ENCODE measurements at regions of chrX and their contacts with region 1.

Region 1: DNA sequence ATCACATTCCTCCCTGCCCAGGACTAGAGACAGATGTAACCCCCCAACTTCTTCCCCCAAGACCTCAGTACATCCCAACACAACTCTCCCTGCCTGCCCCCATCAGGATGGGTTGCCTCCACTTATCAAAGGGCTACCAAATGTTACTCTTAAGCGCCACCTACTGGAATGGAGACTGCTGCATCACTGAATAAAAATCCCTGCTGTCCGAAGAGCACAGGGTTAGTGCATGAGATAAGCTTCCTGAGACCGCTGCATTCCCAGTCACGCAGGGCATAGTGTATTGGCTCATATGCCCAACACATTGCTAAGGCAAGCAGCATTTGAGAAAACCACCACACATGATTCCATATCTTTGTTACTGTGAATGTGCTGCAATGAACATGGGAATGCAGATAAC is 544.5 kb downstream of the PPP4R3C start:
- DNase-seq: peak; percentile 31
- H3K4me3 ChIP-seq: no peak overlapping the region
- H3K27ac ChIP-seq: no peak overlapping the region
- H3K4me1 ChIP-seq: peaks cover 36% of the 10 kb centered on the region
- H3K27me3 ChIP-seq: no peaks in the 10 kb centered on the region
- CTCF ChIP-seq: peak; percentile 17 to 26
- POLR2A ChIP-seq: no peak

Region 2: GRCh38 chrX:25873196-25873595 is 1045.4 kb before region 1 on chrX:
- CTCF ChIA-PET with region 1: no interaction called
- POLR2A ChIA-PET with region 1: no interaction called
- dilution Hi-C with region 1: no loop called
- intact Hi-C with region 1: loop called (anchors 10 kb)
- DNase-seq: peak; percentile 30
- H3K4me3 ChIP-seq: no peak overlapping the region
- H3K27ac ChIP-seq: peak overlapping the region; percentile 7
- H3K4me1 ChIP-seq: peaks cover 25% of the 10 kb centered on the region
- H3K27me3 ChIP-seq: no peaks in the 10 kb centered on the region
- CTCF ChIP-seq: no peak
- POLR2A ChIP-seq: no peak

Region 3: GRCh38 chrX:26442340-26442739 is 476.3 kb before region 1 on chrX:
- CTCF ChIA-PET with region 1: no interaction called
- POLR2A ChIA-PET with region 1: no interaction called
- dilution Hi-C with region 1: no loop called
- intact Hi-C with region 1: loop called (anchors 5 kb)
- DNase-seq: peak; percentile 68
- H3K4me3 ChIP-seq: no peak overlapping the region
- H3K27ac ChIP-seq: no peak overlapping the region
- H3K4me1 ChIP-seq: no peaks in the 10 kb centered on the region
- H3K27me3 ChIP-seq: no peaks in the 10 kb centered on the region
- CTCF ChIP-seq: peak in 1 of 2 donors; percentile 39
- POLR2A ChIP-seq: no peak

Region 4: DNA sequence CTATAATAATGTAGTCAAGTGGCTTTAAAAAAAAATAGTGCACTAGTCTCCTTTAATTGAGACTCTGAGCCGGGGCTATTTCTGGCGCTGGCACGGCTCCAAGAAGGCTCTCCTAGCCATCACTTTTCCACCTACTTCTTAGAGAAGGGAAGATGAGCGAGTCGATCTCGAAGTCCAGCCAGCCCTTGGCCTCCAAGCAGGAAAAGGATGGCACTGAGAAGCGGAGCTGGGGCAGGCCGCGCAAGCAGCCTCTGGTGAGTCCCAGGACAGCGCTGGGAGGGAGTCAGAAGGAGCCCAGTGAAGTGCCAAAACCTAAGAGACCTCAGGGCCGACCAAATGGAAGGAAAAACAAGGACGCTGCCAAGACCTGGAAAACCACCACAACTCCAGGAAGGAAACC is 170.8 kb before region 1 on chrX:
- CTCF ChIA-PET with region 1: no interaction called
- POLR2A ChIA-PET with region 1: no interaction called
- dilution Hi-C with region 1: no loop called
- intact Hi-C with region 1: no loop called
- DNase-seq: no peak
- H3K4me3 ChIP-seq: no peak overlapping the region
- H3K27ac ChIP-seq: no peak overlapping the region
- H3K4me1 ChIP-seq: no peaks in the 10 kb centered on the region
- H3K27me3 ChIP-seq: no peaks in the 10 kb centered on the region
- CTCF ChIP-seq: no peak
- POLR2A ChIP-seq: no peak

Region 5: DNA sequence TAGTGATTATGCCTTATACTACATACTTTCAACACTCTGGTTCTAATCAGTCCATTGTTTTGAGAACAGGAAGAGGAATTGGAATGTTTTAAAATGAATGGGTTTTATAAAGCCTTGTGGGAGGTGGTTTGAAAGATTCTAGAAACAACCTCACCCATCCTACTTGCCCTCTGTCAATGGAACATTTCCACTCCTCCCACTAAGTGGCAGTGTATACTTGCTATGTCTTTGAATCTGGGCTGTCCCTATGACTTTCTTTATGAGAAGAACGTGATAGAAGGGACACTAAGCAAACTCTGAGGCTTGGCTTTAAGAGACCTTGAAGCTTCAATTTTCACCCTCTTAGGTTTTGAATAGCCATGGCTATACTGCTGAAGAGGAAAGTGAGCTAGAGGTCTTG is 66.7 kb before region 1 on chrX:
- CTCF ChIA-PET with region 1: interaction called, 10 read pairs
- POLR2A ChIA-PET with region 1: no interaction called
- dilution Hi-C with region 1: no loop called
- intact Hi-C with region 1: loop called (anchors 1 kb)
- DNase-seq: peak; percentile 87
- H3K4me3 ChIP-seq: no peak overlapping the region
- H3K27ac ChIP-seq: peak overlapping the region; percentile 18
- H3K4me1 ChIP-seq: peaks cover 10% of the 10 kb centered on the region
- H3K27me3 ChIP-seq: no peaks in the 10 kb centered on the region
- CTCF ChIP-seq: peak; percentile 6 to 12
- POLR2A ChIP-seq: no peak

Region 6: DNA sequence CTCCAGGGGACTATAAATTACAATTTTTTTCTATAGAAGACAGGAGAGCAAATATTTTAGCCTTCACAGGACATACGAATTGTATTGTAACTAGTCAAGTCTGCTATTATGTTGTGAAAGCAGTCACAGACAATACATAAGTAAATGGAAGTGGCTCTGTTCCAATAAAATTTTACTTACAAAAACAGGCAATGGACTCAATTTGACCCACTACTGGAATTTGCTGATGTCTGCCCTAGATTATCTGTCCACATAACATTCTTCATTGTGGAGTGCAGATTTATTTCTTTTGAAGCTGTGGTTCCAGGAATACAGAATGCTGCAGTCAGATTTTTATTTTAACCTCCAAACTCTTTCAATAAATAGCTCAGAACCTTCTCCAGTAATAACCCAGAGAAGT is 214.2 kb after region 1 on chrX:
- CTCF ChIA-PET with region 1: no interaction called
- POLR2A ChIA-PET with region 1: no interaction called
- dilution Hi-C with region 1: no loop called
- intact Hi-C with region 1: loop called (anchors 5 kb)
- DNase-seq: peak; percentile 85
- H3K4me3 ChIP-seq: no peak overlapping the region
- H3K27ac ChIP-seq: peak overlapping the region; percentile 34
- H3K4me1 ChIP-seq: no peaks in the 10 kb centered on the region
- H3K27me3 ChIP-seq: no peaks in the 10 kb centered on the region
- CTCF ChIP-seq: no peak
- POLR2A ChIP-seq: no peak

Region 7: DNA sequence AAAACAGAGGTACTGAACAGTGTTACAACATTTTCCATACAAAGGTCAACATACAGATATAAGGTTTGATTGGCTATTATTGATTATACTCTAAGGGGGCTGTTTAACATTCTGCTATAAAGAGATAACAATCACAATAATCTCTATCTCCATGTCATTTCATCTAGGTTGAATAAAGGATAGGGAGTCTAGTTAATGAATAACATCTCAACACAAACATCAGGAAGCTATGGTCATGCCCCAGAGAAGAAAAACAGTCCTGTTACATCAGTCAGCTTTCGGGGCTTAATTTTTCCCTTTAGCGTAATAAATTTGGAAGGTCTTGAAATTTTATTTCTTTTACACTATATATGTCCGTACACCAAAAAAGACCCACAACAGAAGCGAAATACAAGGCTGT is 630.0 kb after region 1 on chrX:
- CTCF ChIA-PET with region 1: no interaction called
- POLR2A ChIA-PET with region 1: no interaction called
- dilution Hi-C with region 1: no loop called
- intact Hi-C with region 1: no loop called
- DNase-seq: no peak
- H3K4me3 ChIP-seq: no peak overlapping the region
- H3K27ac ChIP-seq: no peak overlapping the region
- H3K4me1 ChIP-seq: no peaks in the 10 kb centered on the region
- H3K27me3 ChIP-seq: no peaks in the 10 kb centered on the region
- CTCF ChIP-seq: no peak
- POLR2A ChIP-seq: no peak